Aorta (tissue), 5 donors: ENCODE measurements at regions of chr6 and their contacts with region 1.

Region 1: GRCh38 chr6:148407372-148407771 is 64.7 kb downstream of the SASH1 start:
- DNase-seq: peak in 1 of 2 donors; percentile 60
- ATAC-seq: peak; percentile 81
- H3K4me3 ChIP-seq: no peak overlapping the region
- H3K27ac ChIP-seq: peak overlapping the region in 1 of 2 donors; percentile 64
- H3K4me1 ChIP-seq: peaks cover 4 to 5% of the 10 kb centered on the region in 2 donors
- H3K27me3 ChIP-seq: no peaks in the 10 kb centered on the region

Region 2: DNA sequence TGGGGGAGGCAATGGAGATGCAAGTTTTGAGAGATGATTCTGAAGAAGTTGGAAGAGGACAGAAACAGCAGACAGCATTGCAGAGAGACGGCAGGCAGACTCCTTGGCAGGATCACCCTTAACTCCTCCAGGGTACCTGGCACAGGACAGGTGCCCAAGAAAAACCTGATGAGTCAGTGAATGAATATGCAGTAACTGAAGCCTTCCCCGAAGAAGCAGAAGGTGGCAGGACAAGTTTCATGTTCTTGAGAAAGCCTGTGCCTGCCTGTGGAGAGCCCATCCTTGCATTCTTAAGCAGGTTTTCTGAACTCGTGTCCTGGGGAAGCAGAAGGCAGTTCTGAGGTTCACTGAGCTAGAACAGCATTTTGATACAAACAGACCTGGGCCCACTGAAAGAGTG is 144.4 kb before region 1 on chr6:
- intact Hi-C with region 1: loop called in 1 of 2 experiments (anchors 10 kb)
- DNase-seq: no peak
- ATAC-seq: no peak
- H3K4me3 ChIP-seq: no peak overlapping the region
- H3K27ac ChIP-seq: no peak overlapping the region
- H3K4me1 ChIP-seq: peaks cover 2% of the 10 kb centered on the region in 2 donors
- H3K27me3 ChIP-seq: no peaks in the 10 kb centered on the region

Region 3: GRCh38 chr6:148342357-148343046 is 64.9 kb before region 1 on chr6 and contains the start of gene SASH1:
- intact Hi-C with region 1: loop called (anchors 5 to 10 kb)
- DNase-seq: peak; percentile 83 to 85
- ATAC-seq: peak; percentile 83
- H3K4me3 ChIP-seq: peak within 1 kb of the TSS; percentile 99 to 100
- H3K27ac ChIP-seq: peak within 1 kb of the TSS; percentile 62 to 98
- H3K4me1 ChIP-seq: peaks cover 5 to 8% of the 10 kb centered on the region in 2 donors
- H3K27me3 ChIP-seq: no peaks in the 10 kb centered on the region
- total RNA-seq, gene SASH1: 89.7 to 120 TPM

Region 4: GRCh38 chr6:148440877-148441453 is 33.6 kb after region 1 on chr6:
- intact Hi-C with region 1: loop called in 1 of 2 experiments (anchors 5 kb)
- DNase-seq: peak; percentile 84 to 90
- ATAC-seq: peak; percentile 85
- H3K4me3 ChIP-seq: no peak overlapping the region
- H3K27ac ChIP-seq: peak overlapping the region in 1 of 2 donors; percentile 46
- H3K4me1 ChIP-seq: peaks cover 0 to 12% of the 10 kb centered on the region in 2 donors
- H3K27me3 ChIP-seq: no peaks in the 10 kb centered on the region

Region 5: DNA sequence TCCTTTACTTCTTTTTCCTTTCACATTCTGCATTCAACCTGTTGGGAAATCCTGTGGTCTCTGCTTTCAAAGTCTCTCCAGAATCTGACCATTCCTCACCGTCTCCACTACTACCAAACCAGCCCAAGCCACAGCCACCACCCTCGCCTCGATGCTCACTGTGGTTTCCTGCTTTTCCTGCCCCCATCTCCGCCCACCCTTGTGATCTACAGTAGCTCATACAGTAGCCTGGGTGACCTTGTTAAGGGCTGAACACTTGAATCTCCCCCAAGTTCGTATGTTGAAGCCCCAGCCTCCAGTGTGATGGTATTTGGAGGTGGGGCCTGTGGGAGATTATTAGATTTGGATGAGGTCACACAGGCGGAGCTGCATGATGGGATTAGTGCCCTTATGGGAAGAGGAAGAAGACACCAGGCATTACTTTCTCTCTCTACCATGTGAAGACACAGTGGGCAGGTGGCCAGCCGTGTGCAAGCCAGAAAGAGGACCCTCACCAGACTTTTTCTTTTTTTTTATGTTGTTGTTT is 150.5 kb after region 1 on chr6:
- intact Hi-C with region 1: no loop called
- DNase-seq: no peak
- ATAC-seq: no peak
- H3K4me3 ChIP-seq: no peak overlapping the region
- H3K27ac ChIP-seq: no peak overlapping the region
- H3K4me1 ChIP-seq: no peaks in the 10 kb centered on the region
- H3K27me3 ChIP-seq: no peaks in the 10 kb centered on the region